Caco-2 (cell line): ENCODE measurements at regions of chr5 and their contacts with region 1.

Region 1: GRCh38 chr5:81389025-81389424 is 4.9 kb downstream of the ACOT12 start:
- DNase-seq: no peak
- H3K4me3 ChIP-seq: no peak overlapping the region
- H3K4me3 Mint-ChIP-seq: no peak overlapping the region
- H3K27ac Mint-ChIP-seq: no peak overlapping the region
- H3K4me1 ChIP-seq: no peaks in the 10 kb centered on the region
- H3K4me1 Mint-ChIP-seq: peaks cover 7% of the 10 kb centered on the region
- H3K27me3 ChIP-seq: no peaks in the 10 kb centered on the region
- H3K27me3 Mint-ChIP-seq: no peaks in the 10 kb centered on the region
- CTCF ChIP-seq: no peak

Region 2: DNA sequence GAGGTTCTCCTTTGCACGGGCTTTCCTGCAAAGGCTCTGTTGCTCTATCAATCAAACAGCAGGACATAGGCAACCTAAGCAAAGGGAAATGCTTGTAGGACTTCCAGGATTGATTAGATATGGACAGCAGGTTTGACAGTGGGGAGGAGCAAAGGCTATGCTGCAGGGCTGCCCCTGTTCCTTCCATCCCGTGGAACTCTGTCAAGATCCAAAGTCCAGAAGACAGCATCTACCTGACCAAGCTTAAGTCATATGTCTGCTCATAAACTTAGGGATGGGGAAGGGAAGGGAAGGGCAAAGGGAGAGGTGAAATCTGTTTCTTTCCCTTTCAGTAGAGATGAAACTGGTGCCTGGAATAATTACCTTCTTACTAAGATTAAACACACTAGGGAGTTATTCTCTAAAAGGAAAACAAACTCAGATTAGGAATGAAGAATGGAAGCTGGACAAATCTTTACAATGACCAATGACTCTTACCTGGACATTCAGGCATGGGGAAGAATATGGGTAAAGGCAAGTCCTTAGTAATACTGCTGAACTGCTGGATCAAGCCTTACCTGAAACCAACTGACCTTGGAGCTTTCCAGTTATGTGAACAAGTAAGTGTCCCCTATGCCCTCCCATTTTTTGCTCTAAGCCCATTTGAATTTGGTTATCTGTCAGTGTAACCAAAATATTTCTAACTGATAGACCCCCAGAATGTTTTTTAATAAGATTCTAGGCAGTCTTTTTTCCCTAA is 13.3 kb after region 1 on chr5:
- CTCF ChIA-PET with region 1: no interaction called
- POLR2A ChIA-PET with region 1: no interaction called
- intact Hi-C with region 1: loop called (anchors 1 kb)
- DNase-seq: peak; percentile 28 to 49
- H3K4me3 ChIP-seq: no peak overlapping the region
- H3K4me3 Mint-ChIP-seq: no peak overlapping the region
- H3K27ac Mint-ChIP-seq: no peak overlapping the region
- H3K4me1 ChIP-seq: no peaks in the 10 kb centered on the region; the same call in 1 of the 2 replicates
- H3K4me1 Mint-ChIP-seq: no peaks in the 10 kb centered on the region
- H3K27me3 ChIP-seq: no peaks in the 10 kb centered on the region
- H3K27me3 Mint-ChIP-seq: no peaks in the 10 kb centered on the region
- CTCF ChIP-seq: no peak